A673 (cell line): ENCODE measurements at regions of chr16 and their contacts with region 1.

Region 1: GRCh38 chr16:4463549-4464163 is 10.8 kb downstream of the NMRAL1 start:
- DNase-seq: no peak
- H3K4me3 ChIP-seq: no peak overlapping the region
- H3K27ac ChIP-seq: no peak overlapping the region
- H3K4me1 ChIP-seq: no peaks in the 10 kb centered on the region
- H3K27me3 ChIP-seq: no peaks in the 10 kb centered on the region
- CTCF ChIP-seq: no peak

Region 2: DNA sequence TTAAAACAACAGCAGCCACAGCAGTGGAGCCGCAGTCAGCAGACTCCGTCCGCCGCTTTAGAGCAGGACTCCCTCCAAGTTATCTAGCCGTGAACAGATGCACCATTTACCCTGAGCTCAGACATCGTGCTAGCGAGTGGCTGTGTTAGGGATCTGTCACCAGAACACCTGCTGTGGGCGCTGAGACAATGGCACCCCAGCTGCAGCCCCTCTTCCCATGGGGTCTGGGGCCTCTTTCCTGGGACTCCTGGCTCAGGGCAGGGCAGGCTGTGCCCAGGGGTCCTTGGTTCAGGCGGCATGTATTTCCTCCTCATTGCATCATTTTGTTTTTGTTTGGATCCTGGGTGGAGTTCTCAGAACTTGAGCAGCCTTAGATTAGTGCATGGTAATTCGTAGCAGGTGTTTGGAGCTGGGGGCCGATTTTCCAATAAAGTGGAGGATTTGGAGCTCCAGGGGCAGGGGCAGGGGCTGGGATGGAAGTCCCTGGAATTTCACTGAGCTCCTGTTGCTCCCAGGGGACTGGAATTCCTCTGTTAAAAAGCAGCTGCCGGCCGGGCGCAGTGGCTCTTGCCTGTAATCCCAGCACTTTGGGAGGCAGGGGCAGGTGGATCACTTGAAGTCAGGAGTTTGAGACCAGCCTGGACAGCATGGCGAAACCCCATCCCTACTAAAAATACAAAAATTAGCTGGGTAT is 12.6 kb before region 1 on chr16:
- CTCF ChIA-PET with region 1: no interaction called
- POLR2A ChIA-PET with region 1: interaction called, 18 read pairs
- intact Hi-C with region 1: no loop called
- DNase-seq: peak; percentile 43
- H3K4me3 ChIP-seq: no peak overlapping the region
- H3K27ac ChIP-seq: peak overlapping the region; percentile 82
- H3K4me1 ChIP-seq: peaks cover 13% of the 10 kb centered on the region
- H3K27me3 ChIP-seq: no peaks in the 10 kb centered on the region
- CTCF ChIP-seq: no peak

Region 3: DNA sequence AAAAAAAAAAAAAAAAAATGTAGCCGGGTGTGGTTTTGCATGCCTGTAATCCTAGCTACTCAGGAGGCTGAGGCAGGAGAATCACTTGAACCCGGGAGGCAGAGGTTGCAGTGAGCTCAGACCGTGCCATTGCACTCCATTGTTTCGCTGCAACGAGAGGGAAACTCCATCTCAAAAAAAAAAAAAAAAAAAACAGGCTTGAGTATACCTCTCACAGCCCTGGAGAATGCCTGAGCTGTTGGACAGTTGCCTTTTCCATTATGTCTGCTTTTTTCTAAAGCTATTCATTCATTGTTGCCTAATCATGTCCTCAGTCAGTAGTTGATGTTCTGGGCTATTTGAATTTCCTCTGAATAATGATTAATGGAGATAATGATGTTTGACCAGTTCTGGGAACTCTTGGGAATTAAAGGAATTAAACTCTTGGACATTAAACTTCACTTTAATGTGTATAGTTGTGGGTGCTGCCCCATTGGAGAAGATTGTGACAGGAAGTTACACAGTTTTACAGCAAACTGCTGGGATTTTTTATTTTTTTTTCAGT is 24.4 kb after region 1 on chr16:
- CTCF ChIA-PET with region 1: interaction called, 11 read pairs
- POLR2A ChIA-PET with region 1: no interaction called
- intact Hi-C with region 1: no loop called
- DNase-seq: no peak
- H3K4me3 ChIP-seq: no peak overlapping the region
- H3K27ac ChIP-seq: no peak overlapping the region
- H3K4me1 ChIP-seq: no peaks in the 10 kb centered on the region
- H3K27me3 ChIP-seq: no peaks in the 10 kb centered on the region
- CTCF ChIP-seq: no peak